GM13977 (cell line): ENCODE measurements at regions of chr15 and their contacts with region 1.

Region 1: DNA sequence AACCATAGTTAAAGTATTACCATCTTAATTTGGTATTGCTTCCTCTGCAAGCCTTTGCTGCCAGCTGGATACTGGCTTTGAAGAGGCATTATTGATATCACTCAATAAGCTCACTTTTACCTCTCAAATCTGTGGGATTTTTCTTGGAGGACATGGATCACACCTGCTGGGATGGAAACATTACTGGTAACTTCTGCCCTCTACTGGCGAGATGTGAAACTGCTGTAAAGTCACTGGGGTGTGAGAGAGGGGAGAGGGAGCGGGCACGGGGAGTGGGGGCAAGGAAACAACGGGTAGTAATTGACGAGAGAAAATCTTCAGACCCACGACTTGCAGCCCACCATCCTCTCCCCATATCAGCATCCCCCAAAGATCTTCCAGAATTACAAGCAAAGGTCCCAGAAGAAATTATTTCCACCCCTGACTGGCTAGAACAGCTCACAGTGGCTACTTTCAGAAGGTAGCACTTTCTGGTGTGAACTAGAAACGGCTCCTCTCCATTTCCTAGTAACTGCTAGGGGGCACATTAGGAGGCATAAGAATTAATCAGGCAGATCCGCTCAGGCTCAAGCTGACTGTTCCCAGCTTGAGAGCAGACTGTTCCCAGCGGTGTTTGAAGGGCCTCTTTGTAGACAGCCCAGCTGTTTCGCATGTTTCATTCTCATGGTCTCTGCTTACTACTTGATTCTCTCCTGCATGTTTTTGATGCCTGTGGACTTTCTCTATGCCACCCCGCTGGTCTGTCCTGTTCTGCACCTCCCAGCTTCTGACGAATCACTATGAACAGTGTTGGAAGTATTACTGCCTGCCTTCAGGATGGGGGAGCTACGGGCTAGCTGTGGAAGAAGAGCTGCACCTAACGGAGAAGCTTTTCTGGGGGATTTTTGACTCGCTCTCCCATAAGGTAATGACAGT is 230.4 kb upstream of the CHRM5 start:
- DNase-seq: peak; percentile 39
- CTCF ChIP-seq: peak; percentile 85

Region 2: DNA sequence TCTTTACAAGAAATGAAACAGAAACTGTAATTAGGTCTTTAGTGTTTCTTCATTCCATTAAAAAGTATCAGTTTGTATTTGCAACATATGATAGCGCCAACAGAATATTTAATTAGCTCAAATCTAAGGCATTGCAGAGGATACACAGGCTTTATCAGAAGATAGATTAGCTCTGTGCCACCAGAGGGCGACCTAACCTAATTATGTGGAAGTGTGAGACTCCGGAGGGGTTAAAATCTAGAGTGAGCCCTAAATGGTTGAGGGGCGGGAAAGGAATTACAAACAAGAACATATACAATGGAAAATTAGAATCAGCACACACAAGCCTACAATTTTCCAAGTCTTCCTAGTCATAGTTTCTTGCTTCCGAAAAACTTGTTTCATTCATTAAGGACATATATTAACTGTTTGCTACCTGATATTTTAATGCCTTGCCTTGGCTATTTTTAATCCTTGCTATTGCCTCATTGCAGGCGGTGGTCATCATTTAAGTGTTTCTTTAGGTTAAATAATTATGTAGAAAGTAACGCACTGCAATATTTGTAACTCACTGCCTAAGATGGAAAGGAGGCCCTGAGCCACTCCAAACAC is 445.1 kb before region 1 on chr15:
- in situ Hi-C with region 1: no loop called
- DNase-seq: peak; percentile 61
- CTCF ChIP-seq: peak; percentile 77

Region 3: GRCh38 chr15:33629647-33630046 is 108.3 kb before region 1 on chr15:
- in situ Hi-C with region 1: no loop called
- DNase-seq: no peak
- CTCF ChIP-seq: no peak

Region 4: DNA sequence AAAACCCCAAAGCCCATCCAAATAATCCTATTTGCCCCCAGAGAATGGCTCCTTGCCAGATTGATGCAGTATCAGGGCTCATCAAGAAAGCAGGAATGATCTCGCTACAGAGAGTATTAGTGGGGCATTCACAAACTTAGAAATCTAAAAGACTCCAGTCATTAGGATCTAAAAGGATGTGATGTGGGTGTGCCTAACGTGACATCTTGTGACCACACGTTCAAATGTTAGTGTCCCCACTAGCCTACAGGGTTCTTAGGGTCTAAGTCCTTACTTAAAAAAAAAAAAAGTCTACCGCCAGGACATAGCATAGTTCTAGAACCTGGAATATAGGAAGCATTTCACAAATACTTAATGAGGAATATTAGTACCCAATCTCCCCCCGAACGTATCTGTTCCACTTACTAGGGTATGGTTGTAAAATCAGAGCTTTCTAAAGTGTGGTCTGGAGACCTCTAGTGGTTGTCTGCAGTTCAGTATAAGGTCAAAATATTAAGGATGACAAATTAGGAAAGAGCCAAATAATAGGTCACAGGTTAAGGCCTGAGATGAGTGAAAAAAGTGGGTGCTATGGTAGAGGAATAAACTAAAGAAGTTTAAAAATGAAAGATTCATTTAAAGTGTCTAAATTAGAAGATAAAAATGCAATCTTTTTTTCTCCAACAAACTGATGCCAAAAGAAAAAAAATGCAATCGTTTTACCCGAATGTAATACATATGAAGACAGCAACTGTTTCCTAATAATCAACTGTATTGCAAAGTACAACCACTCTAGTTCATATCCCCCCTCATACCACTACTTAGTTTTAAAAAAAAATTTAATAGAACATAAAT is 226.1 kb after region 1 on chr15:
- in situ Hi-C with region 1: loop called (anchors 10 kb)
- DNase-seq: peak; percentile 28
- CTCF ChIP-seq: peak; percentile 75